Gastrocnemius medialis (tissue), 4 donors: ENCODE measurements at regions of chr17 and their contacts with region 1.

Region 1: GRCh38 chr17:57440522-57441485 is 184.5 kb downstream of the MSI2 start:
- DNase-seq: peak; percentile 58 to 75
- ATAC-seq: peak; percentile 76 to 79
- H3K4me3 ChIP-seq: no peak overlapping the region
- H3K27ac ChIP-seq: peak overlapping the region; percentile 90 to 96 (median 92)
- H3K4me1 ChIP-seq: peaks cover 78 to 85% of the 10 kb centered on the region in 2 donors
- H3K27me3 ChIP-seq: no peaks in the 10 kb centered on the region
- CTCF ChIP-seq: peak in 2 of 5 experiments; percentile 11 to 21
- POLR2A ChIP-seq: no peak

Region 2: DNA sequence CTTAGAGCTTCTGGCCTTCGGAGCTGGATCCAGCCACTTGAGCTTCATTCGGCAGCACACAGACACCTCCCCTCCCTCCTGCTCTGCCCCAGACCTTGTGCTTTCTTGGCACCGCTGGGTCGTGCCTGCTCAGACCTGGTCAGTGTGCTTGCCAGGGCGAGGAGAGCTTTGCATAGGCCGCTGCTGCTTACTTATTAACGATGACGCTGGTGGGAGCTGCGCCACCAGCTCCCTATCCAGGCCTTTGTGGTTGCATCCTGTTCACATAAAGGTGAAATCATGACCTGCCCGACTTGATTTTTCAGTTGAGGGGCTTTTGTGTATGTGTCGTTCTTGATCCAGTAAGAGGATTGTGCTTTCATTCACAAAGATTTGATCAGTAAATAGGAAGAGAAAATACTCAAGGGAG is 83.4 kb before region 1 on chr17:
- in situ Hi-C with region 1: no loop called
- intact Hi-C with region 1: loop called (anchors 5 kb)
- DNase-seq: peak; percentile 75 to 90
- ATAC-seq: peak; percentile 83 to 89
- H3K4me3 ChIP-seq: peak overlapping the region; percentile 10 to 21 (median 14)
- H3K27ac ChIP-seq: peak overlapping the region; percentile 85 to 90 (median 88)
- H3K4me1 ChIP-seq: peaks cover 77 to 83% of the 10 kb centered on the region in 2 donors
- H3K27me3 ChIP-seq: no peaks in the 10 kb centered on the region
- CTCF ChIP-seq: no peak
- POLR2A ChIP-seq: no peak

Region 3: DNA sequence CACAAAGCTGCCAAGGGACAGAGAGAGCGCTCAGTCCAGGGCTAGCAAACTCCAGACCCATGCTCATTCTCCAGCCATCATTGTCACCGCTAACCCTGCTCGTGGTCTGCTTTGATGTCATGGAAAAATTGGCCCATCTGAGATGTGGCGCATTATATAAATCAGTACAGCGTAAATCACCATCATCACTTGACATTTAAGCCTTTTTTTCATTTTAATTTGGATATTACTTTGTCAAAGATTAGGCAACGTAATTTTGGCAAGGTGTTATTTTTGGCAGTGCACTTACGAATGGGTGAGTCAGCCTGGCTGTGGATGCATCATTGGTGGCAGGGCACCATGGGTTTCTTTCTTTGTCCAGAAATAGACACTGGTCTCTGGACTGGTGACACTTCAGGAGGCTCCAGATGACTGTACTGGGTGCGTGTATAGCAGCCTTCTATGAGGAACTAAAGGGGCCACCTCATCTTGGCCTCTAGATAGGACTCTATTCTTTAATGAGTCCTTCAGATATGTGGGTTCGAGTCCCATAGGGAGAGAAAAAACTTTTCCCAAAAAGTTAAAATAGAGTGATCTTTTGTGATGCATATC is 18.1 kb before region 1 on chr17:
- in situ Hi-C with region 1: no loop called
- intact Hi-C with region 1: loop called (anchors 2 kb)
- DNase-seq: peak; percentile 82 to 89
- ATAC-seq: peak; percentile 98 to 99
- H3K4me3 ChIP-seq: no peak overlapping the region
- H3K27ac ChIP-seq: peak overlapping the region; percentile 77 to 81 (median 78)
- H3K4me1 ChIP-seq: peaks cover 26 to 39% of the 10 kb centered on the region in 2 donors
- H3K27me3 ChIP-seq: no peaks in the 10 kb centered on the region
- CTCF ChIP-seq: no peak
- POLR2A ChIP-seq: no peak

Region 4: GRCh38 chr17:57463103-57463851 is 22.5 kb after region 1 on chr17:
- in situ Hi-C with region 1: no loop called
- intact Hi-C with region 1: no loop called
- DNase-seq: no peak
- ATAC-seq: no peak
- H3K4me3 ChIP-seq: no peak overlapping the region
- H3K27ac ChIP-seq: no peak overlapping the region
- H3K4me1 ChIP-seq: peaks cover 46 to 54% of the 10 kb centered on the region in 2 donors
- H3K27me3 ChIP-seq: no peaks in the 10 kb centered on the region
- CTCF ChIP-seq: no peak
- POLR2A ChIP-seq: no peak

Region 5: GRCh38 chr17:57584050-57584551 is 143.3 kb after region 1 on chr17:
- in situ Hi-C with region 1: no loop called
- intact Hi-C with region 1: loop called (anchors 5 kb)
- DNase-seq: no peak
- ATAC-seq: no peak
- H3K4me3 ChIP-seq: no peak overlapping the region
- H3K27ac ChIP-seq: no peak overlapping the region
- H3K4me1 ChIP-seq: peaks cover 18 to 47% of the 10 kb centered on the region in 2 donors
- H3K27me3 ChIP-seq: no peaks in the 10 kb centered on the region
- CTCF ChIP-seq: no peak
- POLR2A ChIP-seq: no peak